ENCODE measurements at regions of chr14 and their contacts with region 1.

Region 1: DNA sequence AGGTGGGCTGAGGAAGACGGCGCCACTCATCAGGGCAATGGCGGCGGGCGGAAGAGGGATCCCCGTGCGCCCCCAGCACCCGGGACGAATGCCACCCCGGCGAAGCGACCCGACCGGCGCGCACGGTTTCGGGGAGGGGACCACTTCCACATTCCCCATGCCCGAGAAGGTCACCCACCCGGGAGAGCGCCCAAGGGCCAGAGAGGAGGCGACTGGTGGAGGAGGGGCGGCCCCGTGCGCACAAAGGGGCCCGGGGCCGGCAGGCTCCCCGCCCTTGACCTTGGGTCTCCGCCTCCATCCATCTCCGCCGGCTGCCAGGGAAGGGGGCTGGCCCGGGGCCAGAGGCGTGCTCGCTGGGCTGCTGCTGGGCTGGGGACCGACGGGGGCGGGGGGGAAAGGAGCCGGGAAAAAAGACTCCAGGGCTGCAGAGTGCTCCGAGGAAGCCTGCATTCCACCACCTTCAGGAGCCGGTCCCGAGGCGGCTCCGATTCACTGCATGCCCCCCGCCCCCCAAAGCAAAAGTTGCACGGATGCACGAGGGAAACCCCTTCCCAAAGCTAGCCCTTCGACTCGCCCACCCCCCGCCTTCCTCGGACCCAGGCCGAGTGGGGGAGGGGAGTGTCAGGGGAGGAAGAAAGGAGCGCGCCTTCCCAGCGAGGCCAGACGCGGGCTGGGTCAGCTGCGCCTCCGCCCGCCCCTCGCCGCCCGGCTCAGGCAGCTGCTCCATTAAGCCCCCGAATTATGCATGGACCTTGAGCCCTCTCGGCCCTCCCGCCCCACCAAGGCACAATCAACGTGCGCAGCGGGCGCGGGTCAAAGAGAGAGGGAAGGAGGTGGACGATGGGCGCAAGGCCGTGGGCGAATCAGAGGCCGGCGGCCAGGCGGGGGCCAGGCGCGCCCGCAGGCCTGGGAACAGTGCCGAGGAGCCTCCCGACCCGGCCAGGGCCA is 26.2 kb downstream of the BCL11B start:
- DNase-seq: peak; percentile 70
- ATAC-seq: no peak
- H3K4me3 Mint-ChIP-seq: peak overlapping the region; percentile 85
- H3K27ac Mint-ChIP-seq: peak overlapping the region; percentile 95
- H3K4me1 Mint-ChIP-seq: peaks cover 77% of the 10 kb centered on the region
- H3K27me3 Mint-ChIP-seq: no peaks in the 10 kb centered on the region

Region 2: DNA sequence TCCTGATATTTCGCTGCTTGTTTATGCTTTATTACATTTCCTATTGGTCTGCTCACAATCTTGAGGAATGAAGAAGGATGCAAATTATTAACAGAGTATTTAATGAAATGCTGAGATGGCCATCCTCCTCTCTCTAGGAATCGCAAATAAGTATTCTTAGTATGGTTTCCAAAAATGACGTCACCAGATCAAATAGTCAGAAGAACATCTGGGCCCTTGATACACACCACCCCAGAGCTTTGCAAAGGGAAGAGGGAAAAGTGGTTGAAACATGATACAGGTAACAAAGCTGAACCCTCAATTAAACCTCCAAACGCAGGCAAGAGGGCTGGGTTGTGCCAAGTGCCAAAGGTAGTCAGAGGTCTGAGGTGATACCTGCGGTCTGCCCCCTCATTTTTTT is 81.1 kb before region 1 on chr14:
- POLR2A ChIA-PET with region 1: no interaction called
- DNase-seq: no peak
- ATAC-seq: no peak
- H3K4me3 Mint-ChIP-seq: no peak overlapping the region
- H3K27ac Mint-ChIP-seq: no peak overlapping the region
- H3K4me1 Mint-ChIP-seq: peaks cover 11% of the 10 kb centered on the region
- H3K27me3 Mint-ChIP-seq: no peaks in the 10 kb centered on the region

Region 3: GRCh38 chr14:99258876-99259726 is 13.3 kb after region 1 on chr14:
- POLR2A ChIA-PET with region 1: interaction called, 796 read pairs
- DNase-seq: peak; percentile 24
- ATAC-seq: peak; percentile 21
- H3K4me3 Mint-ChIP-seq: peak overlapping the region; percentile 98
- H3K27ac Mint-ChIP-seq: peak overlapping the region; percentile 99
- H3K4me1 Mint-ChIP-seq: peaks cover 80% of the 10 kb centered on the region
- H3K27me3 Mint-ChIP-seq: no peaks in the 10 kb centered on the region